CD8-positive, alpha-beta T cell (primary cell): ENCODE measurements at regions of chr19 and their contacts with region 1.

Region 1: DNA sequence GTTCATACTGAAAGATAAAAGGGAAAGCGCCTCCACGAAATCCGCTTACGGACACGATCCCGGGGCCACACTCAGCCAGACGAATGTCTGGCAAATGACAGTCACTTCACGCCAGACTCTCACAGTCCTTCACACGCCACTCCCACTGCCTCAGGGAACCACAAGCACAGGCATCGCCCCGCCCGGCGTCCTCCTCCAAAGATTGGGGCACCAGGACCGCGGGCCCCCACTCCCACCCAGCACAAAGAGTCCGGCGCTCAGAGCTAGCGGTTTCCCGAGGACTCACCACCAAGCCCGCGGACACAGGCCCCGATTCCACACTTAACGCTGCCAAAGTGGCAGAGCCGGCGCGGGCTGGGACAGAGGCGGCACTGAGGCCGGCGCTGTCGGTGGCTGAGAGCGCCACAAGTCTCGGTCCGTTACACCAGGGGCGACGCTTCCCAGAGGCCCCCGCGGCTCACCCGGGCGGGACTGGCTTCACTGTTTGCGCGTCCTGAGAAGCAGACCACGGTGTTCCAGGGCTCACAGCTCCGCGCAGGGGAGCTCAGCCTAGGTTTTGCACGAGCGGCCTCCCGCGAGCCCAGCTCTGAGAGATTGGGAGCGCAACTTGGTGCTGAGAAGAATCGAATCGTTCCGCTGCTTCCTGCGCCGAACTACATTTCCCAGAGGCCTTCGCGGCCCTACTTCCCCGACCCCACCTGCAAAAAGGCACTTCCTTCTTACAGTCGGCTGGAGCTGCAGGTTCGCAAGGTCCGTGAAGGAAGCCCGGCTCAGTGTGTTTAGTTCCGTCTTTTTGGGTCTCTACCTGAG is at the start of gene ZNF569:
- DNase-seq: peak; percentile 79 to 96 (median 89)
- ATAC-seq: peak; percentile 65
- H3K4me3 ChIP-seq: peak within 1 kb of the TSS; percentile 88 to 95
- H3K4me3 Mint-ChIP-seq: peak within 1 kb of the TSS; percentile 93
- H3K27ac ChIP-seq: peak within 1 kb of the TSS; percentile 71 to 90
- H3K27ac Mint-ChIP-seq: peak within 1 kb of the TSS; percentile 94
- H3K4me1 ChIP-seq: peaks cover 17% of the 10 kb centered on the region
- H3K4me1 Mint-ChIP-seq: peaks cover 41% of the 10 kb centered on the region
- H3K27me3 ChIP-seq: no peaks in the 10 kb centered on the region
- H3K27me3 Mint-ChIP-seq: no peaks in the 10 kb centered on the region
- CTCF ChIP-seq: no peak
- total RNA-seq, gene ZNF569: 11.2 to 11.8 TPM

Region 2: DNA sequence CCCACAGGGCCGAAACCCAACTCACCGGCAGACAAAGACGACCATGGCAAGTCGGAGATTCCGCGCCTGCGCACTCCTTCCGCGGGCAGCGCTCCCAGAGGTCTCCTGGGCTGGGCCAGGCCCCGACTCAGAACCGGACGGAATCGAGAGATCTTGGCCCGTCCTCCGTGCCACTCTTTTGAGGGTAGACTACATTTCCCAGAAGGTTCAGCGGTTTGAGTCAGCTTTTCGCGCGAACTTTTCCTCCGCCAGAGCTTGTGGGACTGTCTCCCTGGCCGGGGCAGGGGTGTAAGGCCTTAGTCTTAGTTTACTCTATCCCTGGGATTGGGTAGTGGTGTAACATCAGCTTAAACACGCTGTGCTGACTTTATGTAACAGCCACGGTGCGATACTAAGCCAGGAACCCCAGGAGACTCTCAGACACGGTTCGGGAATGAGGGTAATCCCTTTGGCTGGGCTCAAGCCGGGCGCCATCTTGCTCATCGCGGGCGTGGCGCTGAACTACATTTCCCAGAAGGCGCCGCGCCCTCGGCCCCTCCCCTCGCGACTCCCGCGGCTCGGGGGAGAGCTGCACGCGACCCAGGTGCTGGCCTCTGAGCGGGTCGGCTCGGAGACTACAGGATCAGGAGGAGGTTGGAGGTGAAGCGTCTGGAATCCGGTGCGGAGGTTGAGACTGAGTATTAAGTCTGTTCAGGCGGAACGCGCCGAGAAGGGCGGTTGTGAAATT is 938.6 kb before region 1 on chr19 and contains the start of gene ZNF260:
- CTCF ChIA-PET with region 1: no interaction called
- POLR2A ChIA-PET with region 1: no interaction called
- intact Hi-C with region 1: loop called in 1 of 2 experiments (anchors 1 kb)
- DNase-seq: peak; percentile 77 to 96 (median 92)
- ATAC-seq: peak; percentile 90
- H3K4me3 ChIP-seq: peak within 1 kb of the TSS; percentile 64 to 85
- H3K4me3 Mint-ChIP-seq: peak within 1 kb of the TSS; percentile 99
- H3K27ac ChIP-seq: peak within 1 kb of the TSS; percentile 52 to 84
- H3K27ac Mint-ChIP-seq: peak within 1 kb of the TSS; percentile 96
- H3K4me1 ChIP-seq: peaks cover 21% of the 10 kb centered on the region
- H3K4me1 Mint-ChIP-seq: peaks cover 28% of the 10 kb centered on the region
- H3K27me3 ChIP-seq: no peaks in the 10 kb centered on the region
- H3K27me3 Mint-ChIP-seq: no peaks in the 10 kb centered on the region
- CTCF ChIP-seq: no peak
- total RNA-seq, gene ZNF260: 2.8 to 4.6 TPM

Region 3: GRCh38 chr19:36687214-36688056 is 779.6 kb before region 1 on chr19 and contains the start of gene ZNF567:
- CTCF ChIA-PET with region 1: no interaction called
- POLR2A ChIA-PET with region 1: no interaction called
- intact Hi-C with region 1: loop called in 1 of 2 experiments (anchors 5 kb)
- DNase-seq: peak; percentile 91 to 99 (median 98)
- ATAC-seq: peak; percentile 91
- H3K4me3 ChIP-seq: peak within 1 kb of the TSS; percentile 82 to 87
- H3K4me3 Mint-ChIP-seq: peak within 1 kb of the TSS; percentile 99
- H3K27ac ChIP-seq: peak within 1 kb of the TSS; percentile 71 to 81
- H3K27ac Mint-ChIP-seq: peak within 1 kb of the TSS; percentile 96
- H3K4me1 ChIP-seq: peaks cover 18% of the 10 kb centered on the region
- H3K4me1 Mint-ChIP-seq: peaks cover 35% of the 10 kb centered on the region
- H3K27me3 ChIP-seq: no peaks in the 10 kb centered on the region
- H3K27me3 Mint-ChIP-seq: no peaks in the 10 kb centered on the region
- CTCF ChIP-seq: no peak
- total RNA-seq, gene ZNF567: 10.7 to 11.1 TPM

Region 4: DNA sequence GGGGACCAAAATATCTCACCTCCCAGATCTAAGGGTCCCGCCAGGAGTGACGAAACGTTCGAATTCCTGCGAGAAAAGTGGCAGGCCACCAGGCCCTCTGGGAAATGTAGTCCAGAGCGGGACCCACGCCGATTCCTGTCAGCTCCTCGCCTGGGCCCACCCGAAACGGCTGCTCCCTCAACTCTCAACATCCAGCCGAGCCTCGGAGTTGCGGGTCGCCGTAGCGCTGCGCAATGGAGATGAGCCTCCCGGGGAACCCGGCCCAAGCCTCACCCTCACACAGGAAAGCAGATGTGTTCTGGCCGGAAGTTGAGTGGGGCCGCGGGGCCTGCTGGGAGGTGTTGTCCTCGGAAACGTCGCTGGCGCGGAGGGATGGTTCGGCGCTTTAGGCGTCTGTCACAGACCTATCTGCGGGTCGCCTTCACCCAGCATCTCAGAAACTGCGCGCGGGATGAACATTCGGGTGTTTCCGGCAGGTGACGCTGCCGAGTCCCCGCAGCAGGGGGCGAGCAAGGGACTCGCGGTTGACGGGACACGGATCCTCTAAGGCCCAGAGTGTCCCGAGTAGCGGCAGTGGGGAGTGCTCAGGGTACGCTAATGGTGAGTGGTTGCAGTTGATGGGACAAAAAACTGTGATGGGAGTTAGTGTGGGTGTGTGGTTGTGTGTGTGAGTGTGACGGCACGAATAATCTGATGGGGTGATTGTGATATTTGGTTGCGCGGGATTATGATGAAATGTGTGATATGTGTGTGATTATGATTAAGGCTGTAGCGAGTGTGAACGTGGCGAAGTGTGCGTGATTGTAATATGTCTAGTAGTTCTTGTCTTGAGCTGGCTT is 550.8 kb before region 1 on chr19 and contains the starts of genes ZNF568 and ZNF829:
- CTCF ChIA-PET with region 1: no interaction called
- POLR2A ChIA-PET with region 1: no interaction called
- intact Hi-C with region 1: loop called (anchors 1 to 2 kb)
- DNase-seq: peak; percentile 82 to 97 (median 92)
- ATAC-seq: peak; percentile 97
- H3K4me3 ChIP-seq: peak within 1 kb of the TSS; percentile 75 to 79
- H3K4me3 Mint-ChIP-seq: peak within 1 kb of the TSS; percentile 89
- H3K27ac ChIP-seq: peak within 1 kb of the TSS; percentile 80 to 95
- H3K27ac Mint-ChIP-seq: peak within 1 kb of the TSS; percentile 95
- H3K4me1 ChIP-seq: peaks cover 10% of the 10 kb centered on the region
- H3K4me1 Mint-ChIP-seq: peaks cover 36% of the 10 kb centered on the region
- H3K27me3 ChIP-seq: no peaks in the 10 kb centered on the region
- H3K27me3 Mint-ChIP-seq: no peaks in the 10 kb centered on the region
- CTCF ChIP-seq: peak; percentile 91
- total RNA-seq, gene ZNF568: 4.6 to 5.5 TPM
- total RNA-seq, gene ZNF829: 6.1 to 6.2 TPM

Region 5: DNA sequence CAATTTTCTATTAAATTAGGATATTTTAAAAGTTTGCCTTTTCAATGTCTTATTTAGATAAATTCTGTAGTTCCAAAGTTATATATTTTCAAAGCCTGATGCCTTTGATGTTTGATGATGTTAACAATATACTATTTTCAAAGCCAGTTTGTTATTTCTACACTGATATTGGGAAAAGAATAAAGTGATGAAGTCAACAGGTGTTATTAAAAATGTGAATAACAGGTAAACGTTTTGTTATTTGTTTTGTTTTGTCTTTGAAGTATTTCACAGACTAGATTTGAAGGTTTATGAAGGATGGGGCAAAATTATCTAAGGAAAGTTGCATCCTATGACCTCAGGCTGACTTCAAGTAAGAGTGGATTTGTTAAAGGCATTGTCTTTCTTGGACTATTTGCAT is 421.9 kb before region 1 on chr19:
- CTCF ChIA-PET with region 1: no interaction called
- POLR2A ChIA-PET with region 1: no interaction called
- intact Hi-C with region 1: no loop called
- DNase-seq: no peak
- ATAC-seq: no peak
- H3K4me3 ChIP-seq: no peak overlapping the region
- H3K4me3 Mint-ChIP-seq: no peak overlapping the region
- H3K27ac ChIP-seq: no peak overlapping the region
- H3K27ac Mint-ChIP-seq: no peak overlapping the region
- H3K4me1 ChIP-seq: no peaks in the 10 kb centered on the region
- H3K4me1 Mint-ChIP-seq: no peaks in the 10 kb centered on the region
- H3K27me3 ChIP-seq: no peaks in the 10 kb centered on the region
- H3K27me3 Mint-ChIP-seq: no peaks in the 10 kb centered on the region
- CTCF ChIP-seq: no peak

Region 6: GRCh38 chr19:37217855-37218591 is 249.0 kb before region 1 on chr19 and contains the start of gene ZNF383:
- CTCF ChIA-PET with region 1: no interaction called
- POLR2A ChIA-PET with region 1: no interaction called
- intact Hi-C with region 1: loop called (anchors 1 kb)
- DNase-seq: peak; percentile 68 to 92 (median 82)
- ATAC-seq: peak; percentile 88
- H3K4me3 ChIP-seq: peak within 1 kb of the TSS; percentile 71 to 92
- H3K4me3 Mint-ChIP-seq: peak within 1 kb of the TSS; percentile 87
- H3K27ac ChIP-seq: peak within 1 kb of the TSS; percentile 69 to 92
- H3K27ac Mint-ChIP-seq: peak within 1 kb of the TSS; percentile 93
- H3K4me1 ChIP-seq: peaks cover 11% of the 10 kb centered on the region
- H3K4me1 Mint-ChIP-seq: peaks cover 31% of the 10 kb centered on the region
- H3K27me3 ChIP-seq: no peaks in the 10 kb centered on the region
- H3K27me3 Mint-ChIP-seq: no peaks in the 10 kb centered on the region
- CTCF ChIP-seq: no peak
- total RNA-seq, gene ZNF383: 17.5 to 18.9 TPM

Region 7: DNA sequence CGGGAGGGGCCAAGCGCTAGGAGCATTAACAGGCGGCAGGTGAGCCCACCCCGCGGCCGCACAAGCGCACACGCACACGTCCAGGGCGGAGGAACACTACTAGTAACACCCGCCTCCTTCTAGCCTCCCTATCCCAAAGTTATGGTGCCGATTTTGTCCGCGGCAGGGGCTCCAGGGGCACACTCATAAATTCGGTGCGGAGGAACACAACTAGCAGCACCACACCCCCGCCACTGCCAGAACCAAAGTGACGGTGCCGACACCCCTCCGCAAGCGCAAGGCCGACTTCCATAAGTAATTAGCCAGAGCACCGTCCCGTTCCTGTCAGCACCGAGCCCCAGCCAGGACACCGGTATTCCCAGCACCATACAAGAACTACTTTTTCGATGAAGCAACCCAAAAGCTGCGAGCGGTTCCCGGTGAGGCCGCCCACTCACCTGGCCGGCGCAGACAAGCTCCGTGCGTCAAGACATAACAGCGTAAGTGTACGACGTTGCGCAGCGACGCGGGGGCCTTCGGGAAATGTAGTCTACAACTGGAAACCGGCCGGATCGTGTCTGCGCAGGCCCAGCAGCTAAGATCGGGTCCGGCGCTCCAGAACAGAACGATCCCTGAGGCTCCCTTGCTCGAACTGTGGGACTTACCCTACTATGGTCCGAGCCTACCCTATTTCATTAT is 127.4 kb after region 1 on chr19 and contains the starts of genes ZNF540 and ZNF571:
- CTCF ChIA-PET with region 1: no interaction called
- POLR2A ChIA-PET with region 1: interaction called, 21 read pairs
- intact Hi-C with region 1: loop called (anchors 1 kb)
- DNase-seq: peak; percentile 83 to 96 (median 93)
- ATAC-seq: peak; percentile 93
- H3K4me3 ChIP-seq: peak within 1 kb of the TSS; percentile 66 to 70
- H3K4me3 Mint-ChIP-seq: peak within 1 kb of the TSS; percentile 98
- H3K27ac ChIP-seq: peak within 1 kb of the TSS; percentile 84 to 97
- H3K27ac Mint-ChIP-seq: peak within 1 kb of the TSS; percentile 99
- H3K4me1 ChIP-seq: peaks cover 10% of the 10 kb centered on the region
- H3K4me1 Mint-ChIP-seq: peaks cover 31% of the 10 kb centered on the region
- H3K27me3 ChIP-seq: no peaks in the 10 kb centered on the region
- H3K27me3 Mint-ChIP-seq: no peaks in the 10 kb centered on the region
- CTCF ChIP-seq: no peak
- total RNA-seq, gene ZNF540: 17.8 to 20.1 TPM
- total RNA-seq, gene ZNF571: 30.5 to 30.8 TPM

Region 8: DNA sequence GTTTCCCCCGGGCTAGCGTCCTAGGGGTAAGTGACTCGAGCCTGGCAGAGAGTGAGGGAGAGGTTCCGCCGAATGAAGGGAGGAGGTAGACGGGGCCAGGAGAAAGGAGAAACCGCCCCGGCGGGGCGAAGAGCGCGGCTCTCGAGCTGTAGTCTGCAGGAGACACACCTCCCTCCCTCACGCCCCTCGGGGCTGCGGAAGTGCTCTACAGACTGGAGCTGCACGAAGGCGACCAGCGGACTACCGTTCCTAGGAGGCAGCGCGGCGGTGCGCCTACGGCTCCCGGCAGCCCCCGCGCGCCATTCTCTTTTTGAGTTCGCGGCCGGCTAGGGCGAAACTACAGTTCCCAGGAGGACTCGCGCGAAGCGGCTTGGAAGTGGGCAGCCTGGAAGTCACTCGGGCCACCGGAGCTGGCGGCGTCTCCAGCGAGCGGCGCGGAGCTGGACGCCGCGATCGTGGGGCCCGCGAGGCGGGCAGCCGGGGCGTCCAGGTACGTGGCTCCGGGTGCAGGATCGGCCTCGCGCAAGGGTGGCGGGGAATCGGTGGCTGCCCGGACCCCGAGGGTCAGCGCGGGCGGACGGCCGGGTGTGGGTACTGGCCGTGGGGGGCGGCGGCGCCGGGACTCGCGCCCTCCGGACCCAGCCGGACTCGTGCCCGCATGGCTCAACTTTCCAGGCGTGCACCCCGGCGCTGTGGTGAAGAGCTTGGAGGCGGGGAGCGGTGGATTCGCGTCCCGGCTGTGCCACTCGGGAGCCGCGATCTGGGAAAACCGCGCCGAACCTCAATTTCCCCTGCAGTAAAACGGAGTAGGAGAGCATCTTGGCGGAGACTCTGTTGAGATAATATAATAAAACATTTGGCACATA is 440.1 kb after region 1 on chr19 and contains the start of gene SIPA1L3:
- CTCF ChIA-PET with region 1: no interaction called
- POLR2A ChIA-PET with region 1: interaction called, 5 read pairs
- intact Hi-C with region 1: loop called in 1 of 2 experiments (anchors 5 kb)
- DNase-seq: peak; percentile 79 to 95 (median 93)
- ATAC-seq: peak; percentile 98
- H3K4me3 ChIP-seq: peak within 1 kb of the TSS; percentile 74 to 98
- H3K4me3 Mint-ChIP-seq: peak within 1 kb of the TSS; percentile 92
- H3K27ac ChIP-seq: peak within 1 kb of the TSS; percentile 64 to 68
- H3K27ac Mint-ChIP-seq: peak within 1 kb of the TSS; percentile 90
- H3K4me1 ChIP-seq: peaks cover 20% of the 10 kb centered on the region
- H3K4me1 Mint-ChIP-seq: peaks cover 31% of the 10 kb centered on the region
- H3K27me3 ChIP-seq: no peaks in the 10 kb centered on the region
- H3K27me3 Mint-ChIP-seq: no peaks in the 10 kb centered on the region
- CTCF ChIP-seq: no peak
- total RNA-seq, gene SIPA1L3: 13.5 to 14.6 TPM